ENCODE measurements at regions of chr14 and their contacts with region 1.

Region 1: GRCh38 chr14:103520657-103521437 is 1.8 kb downstream of the CKB start:
- DNase-seq: no peak
- H3K4me3 ChIP-seq: peak overlapping the region; percentile 46
- CTCF ChIP-seq: peak; percentile 69

Region 2: DNA sequence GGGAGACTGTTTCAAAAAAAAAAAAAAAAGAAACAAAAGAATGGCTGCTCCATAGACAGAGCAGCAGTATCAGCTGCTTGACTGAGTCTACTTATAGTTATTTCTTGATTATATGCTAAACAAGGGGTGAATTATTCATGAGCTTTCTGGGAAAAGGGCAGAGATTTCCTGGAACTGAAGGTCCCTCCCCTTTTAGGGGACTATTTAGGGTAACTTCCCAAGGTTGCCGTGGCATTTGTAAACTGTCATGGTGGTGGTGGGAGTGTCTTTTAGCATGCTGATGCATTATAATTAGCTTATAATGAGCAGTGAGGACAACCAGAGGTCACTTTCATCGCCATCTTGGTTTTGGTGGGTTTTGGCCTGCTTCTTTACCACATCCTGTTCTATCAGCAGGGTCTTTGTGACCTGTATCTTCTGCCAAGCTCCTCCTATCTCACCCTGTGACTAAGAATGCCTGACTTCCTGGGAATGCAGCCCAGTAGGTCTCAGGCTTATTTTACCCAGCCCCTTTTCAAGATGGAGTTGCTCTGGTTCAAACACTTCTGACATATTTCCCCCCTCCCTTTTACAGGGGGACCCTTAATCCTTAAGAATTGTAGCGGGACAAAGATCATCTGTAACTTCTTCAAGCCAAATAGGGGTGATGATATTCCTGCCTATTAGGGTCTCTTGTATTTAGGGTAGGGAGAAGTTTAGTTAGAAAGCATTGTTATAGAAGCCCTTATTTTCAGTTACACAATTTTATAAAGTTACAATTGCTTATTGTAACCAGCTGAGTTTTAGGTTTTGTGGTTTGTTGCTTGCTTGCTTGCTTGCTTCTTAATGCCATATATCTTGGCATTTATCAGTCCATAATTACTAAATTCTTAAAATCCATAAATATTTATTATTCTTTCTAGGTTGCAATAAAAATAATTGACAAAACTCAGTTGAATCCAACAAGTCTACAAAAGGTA is 93.1 kb before region 1 on chr14:
- CTCF ChIA-PET with region 1: no interaction called
- POLR2A ChIA-PET with region 1: no interaction called
- DNase-seq: no peak
- H3K4me3 ChIP-seq: no peak overlapping the region
- CTCF ChIP-seq: no peak

Region 3: GRCh38 chr14:103510311-103511021 is 10.4 kb before region 1 on chr14:
- CTCF ChIA-PET with region 1: interaction called, 61 read pairs
- POLR2A ChIA-PET with region 1: no interaction called
- DNase-seq: no peak
- H3K4me3 ChIP-seq: no peak overlapping the region
- CTCF ChIP-seq: no peak

Region 4: DNA sequence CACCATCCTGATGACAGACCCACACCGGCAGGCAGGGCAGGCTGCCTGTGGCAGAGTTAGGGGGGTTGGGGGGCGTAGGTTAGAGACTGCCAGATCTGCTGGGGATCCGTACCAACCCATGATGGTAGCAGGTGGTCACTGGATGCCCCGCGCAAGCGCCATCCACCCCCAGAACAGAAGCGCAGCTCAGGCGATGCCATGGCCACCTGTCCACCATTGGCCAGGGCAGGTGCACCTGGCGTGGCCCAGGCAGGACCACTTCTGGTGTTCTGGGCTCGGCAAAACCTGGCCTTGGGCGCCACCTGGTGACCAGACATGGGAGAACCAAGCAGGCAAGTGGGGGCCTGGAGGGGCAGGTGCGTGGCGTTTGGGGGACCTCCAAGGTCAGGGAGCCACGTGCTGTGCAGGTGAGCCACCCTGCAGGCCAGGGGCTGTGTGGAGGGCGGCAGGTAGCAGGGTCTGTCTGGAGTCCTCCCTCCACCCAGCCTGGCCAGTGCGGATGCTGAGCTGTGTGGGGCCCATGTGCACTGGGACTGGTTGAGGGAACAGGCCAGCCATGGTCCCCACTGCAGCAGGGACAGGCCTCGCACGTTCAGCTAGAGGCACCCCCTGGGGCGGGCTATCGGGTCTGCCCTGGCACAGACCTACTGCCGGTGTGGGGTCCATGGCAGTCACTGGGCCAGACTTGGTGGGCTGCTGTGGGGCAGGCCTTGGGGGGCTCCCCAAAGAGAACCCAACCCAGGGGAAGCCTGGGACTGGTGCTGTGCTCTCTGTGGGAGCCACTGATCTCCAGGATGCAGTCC is 26.0 kb after region 1 on chr14:
- CTCF ChIA-PET with region 1: interaction called, 368 read pairs
- POLR2A ChIA-PET with region 1: no interaction called
- DNase-seq: no peak
- H3K4me3 ChIP-seq: no peak overlapping the region
- CTCF ChIP-seq: peak; percentile 92

Region 5: GRCh38 chr14:103562429-103563225 is 41.8 kb after region 1 on chr14 and contains the starts of genes BAG5 and COA8:
- CTCF ChIA-PET with region 1: interaction called, 24 read pairs
- POLR2A ChIA-PET with region 1: no interaction called
- DNase-seq: no peak
- H3K4me3 ChIP-seq: peak within 1 kb of the TSS; percentile 67
- CTCF ChIP-seq: no peak

Region 6: GRCh38 chr14:103597623-103598377 is 77.0 kb after region 1 on chr14:
- CTCF ChIA-PET with region 1: no interaction called
- POLR2A ChIA-PET with region 1: no interaction called
- DNase-seq: no peak
- H3K4me3 ChIP-seq: no peak overlapping the region
- CTCF ChIP-seq: no peak